Caco-2 (cell line): ENCODE measurements at regions of chr9 and their contacts with region 1.

Region 1: GRCh38 chr9:129028192-129028957 is at the start of gene SH3GLB2:
- DNase-seq: peak; percentile 95 to 96
- H3K4me3 ChIP-seq: peak within 1 kb of the TSS; percentile 73
- H3K4me3 Mint-ChIP-seq: peak within 1 kb of the TSS; percentile 84
- H3K27ac Mint-ChIP-seq: peak within 1 kb of the TSS; percentile 86
- H3K4me1 ChIP-seq: peaks cover 28% of the 10 kb centered on the region
- H3K4me1 Mint-ChIP-seq: peaks cover 36% of the 10 kb centered on the region
- H3K27me3 ChIP-seq: no peaks in the 10 kb centered on the region
- H3K27me3 Mint-ChIP-seq: no peaks in the 10 kb centered on the region
- CTCF ChIP-seq: peak; percentile 83 to 91
- total RNA-seq, gene SH3GLB2: 64.2 and 66.7 TPM in 2 replicates

Region 2: DNA sequence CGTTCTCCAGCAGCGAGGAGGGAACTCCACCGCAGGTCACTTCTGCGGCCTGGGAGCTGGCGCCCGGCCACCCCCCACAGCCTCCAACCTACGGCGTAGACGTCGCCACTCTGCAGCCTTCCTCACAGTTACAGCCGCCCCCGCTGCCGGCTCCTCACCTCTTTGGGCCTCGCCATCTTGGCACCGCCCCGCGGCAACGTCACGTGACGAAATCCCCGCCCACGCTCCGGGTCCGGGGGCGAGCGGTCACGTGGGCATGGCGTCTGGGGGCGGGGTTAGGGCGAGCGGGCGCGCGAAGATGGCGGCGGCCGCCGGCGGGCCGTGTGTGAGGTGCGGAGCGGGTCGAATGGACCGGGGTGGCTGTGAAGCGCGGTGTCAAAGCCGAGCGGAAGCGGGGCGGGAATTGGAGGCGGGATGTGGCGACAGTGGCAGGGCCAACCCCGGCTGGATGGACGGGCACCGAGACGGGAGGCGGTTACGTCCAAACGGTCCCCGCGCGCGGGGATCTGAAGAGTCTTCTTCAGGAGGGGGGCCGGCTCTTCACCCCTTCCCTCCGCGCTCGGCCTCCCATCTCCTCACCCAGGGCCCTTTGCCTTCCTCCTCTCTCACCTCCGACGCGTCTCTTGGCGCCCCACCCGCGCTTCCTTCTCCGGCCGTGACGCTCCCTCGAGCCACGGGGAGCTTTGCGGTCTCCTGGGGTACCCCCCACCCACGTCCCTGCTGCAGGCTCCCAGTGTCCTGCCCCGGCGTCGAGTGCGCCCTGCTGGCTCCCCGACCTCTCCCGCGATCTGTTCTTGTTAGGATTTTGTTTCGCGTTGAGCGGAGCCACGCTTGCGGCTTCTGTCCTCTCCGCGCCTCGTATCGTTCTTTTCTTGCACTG is 80.7 kb before region 1 on chr9 and contains the starts of genes DOLK and NUP188:
- CTCF ChIA-PET with region 1: interaction called, 5 read pairs
- POLR2A ChIA-PET with region 1: no interaction called
- intact Hi-C with region 1: loop called (anchors 5 kb)
- DNase-seq: peak; percentile 94 to 98
- H3K4me3 ChIP-seq: peak within 1 kb of the TSS; percentile 98
- H3K4me3 Mint-ChIP-seq: peak within 1 kb of the TSS; percentile 92
- H3K27ac Mint-ChIP-seq: peak within 1 kb of the TSS; percentile 96
- H3K4me1 ChIP-seq: peaks cover 26% of the 10 kb centered on the region
- H3K4me1 Mint-ChIP-seq: peaks cover 24% of the 10 kb centered on the region
- H3K27me3 ChIP-seq: no peaks in the 10 kb centered on the region
- H3K27me3 Mint-ChIP-seq: no peaks in the 10 kb centered on the region
- CTCF ChIP-seq: no peak
- total RNA-seq, gene DOLK: 25.9 and 27.2 TPM in 2 replicates
- total RNA-seq, gene NUP188: 80.9 and 85.7 TPM in 2 replicates

Region 3: GRCh38 chr9:128972956-128973355 is 55.4 kb before region 1 on chr9:
- CTCF ChIA-PET with region 1: no interaction called
- POLR2A ChIA-PET with region 1: no interaction called
- intact Hi-C with region 1: no loop called
- DNase-seq: no peak
- H3K4me3 ChIP-seq: no peak overlapping the region
- H3K4me3 Mint-ChIP-seq: no peak overlapping the region
- H3K27ac Mint-ChIP-seq: no peak overlapping the region
- H3K4me1 ChIP-seq: no peaks in the 10 kb centered on the region
- H3K4me1 Mint-ChIP-seq: no peaks in the 10 kb centered on the region
- H3K27me3 ChIP-seq: no peaks in the 10 kb centered on the region
- H3K27me3 Mint-ChIP-seq: no peaks in the 10 kb centered on the region
- CTCF ChIP-seq: no peak

Region 4: GRCh38 chr9:129006328-129007034 is 21.9 kb before region 1 on chr9:
- CTCF ChIA-PET with region 1: interaction called, 10 read pairs
- POLR2A ChIA-PET with region 1: no interaction called
- intact Hi-C with region 1: loop called (anchors 2 kb)
- DNase-seq: peak; percentile 77 to 83
- H3K4me3 ChIP-seq: no peak overlapping the region
- H3K4me3 Mint-ChIP-seq: no peak overlapping the region
- H3K27ac Mint-ChIP-seq: peak overlapping the region; percentile 49
- H3K4me1 ChIP-seq: no peaks in the 10 kb centered on the region
- H3K4me1 Mint-ChIP-seq: no peaks in the 10 kb centered on the region
- H3K27me3 ChIP-seq: no peaks in the 10 kb centered on the region
- H3K27me3 Mint-ChIP-seq: no peaks in the 10 kb centered on the region
- CTCF ChIP-seq: peak; percentile 78 to 96

Region 5: GRCh38 chr9:129073404-129073803 is 45.0 kb after region 1 on chr9:
- CTCF ChIA-PET with region 1: interaction called, 10 read pairs
- POLR2A ChIA-PET with region 1: interaction called, 3 read pairs
- intact Hi-C with region 1: no loop called
- DNase-seq: no peak
- H3K4me3 ChIP-seq: no peak overlapping the region
- H3K4me3 Mint-ChIP-seq: no peak overlapping the region
- H3K27ac Mint-ChIP-seq: no peak overlapping the region
- H3K4me1 ChIP-seq: no peaks in the 10 kb centered on the region; the same call in 1 of the 2 replicates
- H3K4me1 Mint-ChIP-seq: no peaks in the 10 kb centered on the region
- H3K27me3 ChIP-seq: no peaks in the 10 kb centered on the region
- H3K27me3 Mint-ChIP-seq: no peaks in the 10 kb centered on the region
- CTCF ChIP-seq: no peak

Region 6: GRCh38 chr9:129080602-129081387 is 52.4 kb after region 1 on chr9 and contains the start of gene DOLPP1:
- CTCF ChIA-PET with region 1: interaction called, 14 read pairs
- POLR2A ChIA-PET with region 1: interaction called, 4 read pairs
- intact Hi-C with region 1: loop called (anchors 1 kb)
- DNase-seq: peak; percentile 99 to 100
- H3K4me3 ChIP-seq: peak within 1 kb of the TSS; percentile 70
- H3K4me3 Mint-ChIP-seq: peak within 1 kb of the TSS; percentile 86
- H3K27ac Mint-ChIP-seq: peak within 1 kb of the TSS; percentile 80
- H3K4me1 ChIP-seq: peaks cover 14% of the 10 kb centered on the region; the same call in 1 of the 2 replicates
- H3K4me1 Mint-ChIP-seq: peaks cover 5% of the 10 kb centered on the region
- H3K27me3 ChIP-seq: no peaks in the 10 kb centered on the region
- H3K27me3 Mint-ChIP-seq: no peaks in the 10 kb centered on the region
- CTCF ChIP-seq: no peak
- total RNA-seq, gene DOLPP1: 44.7 and 45.1 TPM in 2 replicates

Region 7: DNA sequence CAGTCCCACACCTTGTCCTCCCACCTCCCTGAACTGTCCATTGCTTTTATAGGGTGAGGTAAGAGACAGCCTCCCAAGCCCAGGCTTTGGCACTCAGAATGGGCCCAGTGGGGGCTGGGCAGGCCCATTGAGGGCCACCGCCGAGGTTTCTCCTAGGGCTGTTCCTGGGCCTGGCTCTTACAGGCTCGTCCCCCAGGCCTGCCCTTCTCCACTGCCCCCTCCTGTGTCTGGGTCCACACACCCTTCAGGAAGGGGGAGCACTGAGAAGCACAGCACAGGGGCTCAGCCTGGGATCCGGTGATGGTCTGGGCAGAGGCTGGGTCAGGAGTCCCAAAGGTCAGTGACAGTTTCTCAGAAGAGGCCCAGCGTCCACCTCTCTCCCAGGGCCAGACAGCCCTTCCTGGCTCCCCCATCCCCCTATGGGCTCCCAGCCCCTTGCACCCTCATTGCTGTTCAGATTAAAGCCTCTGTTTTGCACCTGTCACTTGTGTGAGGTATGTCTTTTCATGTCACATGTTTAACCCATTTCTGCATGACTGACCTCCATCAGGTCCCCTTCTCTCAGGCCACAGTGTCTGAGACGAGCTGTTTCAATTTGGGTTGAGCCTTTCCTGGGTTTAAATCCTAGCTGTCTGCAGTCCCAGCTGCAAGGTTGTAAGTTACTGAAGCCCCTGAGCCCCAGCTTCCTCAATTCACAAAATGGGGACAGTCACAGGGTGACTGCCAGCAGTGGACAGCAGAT is 120.3 kb after region 1 on chr9:
- CTCF ChIA-PET with region 1: no interaction called
- POLR2A ChIA-PET with region 1: no interaction called
- intact Hi-C with region 1: no loop called
- DNase-seq: no peak
- H3K4me3 ChIP-seq: no peak overlapping the region
- H3K4me3 Mint-ChIP-seq: no peak overlapping the region
- H3K27ac Mint-ChIP-seq: peak overlapping the region; percentile 93
- H3K4me1 ChIP-seq: peaks cover 33% of the 10 kb centered on the region
- H3K4me1 Mint-ChIP-seq: peaks cover 20% of the 10 kb centered on the region
- H3K27me3 ChIP-seq: no peaks in the 10 kb centered on the region
- H3K27me3 Mint-ChIP-seq: no peaks in the 10 kb centered on the region
- CTCF ChIP-seq: no peak

Region 8: DNA sequence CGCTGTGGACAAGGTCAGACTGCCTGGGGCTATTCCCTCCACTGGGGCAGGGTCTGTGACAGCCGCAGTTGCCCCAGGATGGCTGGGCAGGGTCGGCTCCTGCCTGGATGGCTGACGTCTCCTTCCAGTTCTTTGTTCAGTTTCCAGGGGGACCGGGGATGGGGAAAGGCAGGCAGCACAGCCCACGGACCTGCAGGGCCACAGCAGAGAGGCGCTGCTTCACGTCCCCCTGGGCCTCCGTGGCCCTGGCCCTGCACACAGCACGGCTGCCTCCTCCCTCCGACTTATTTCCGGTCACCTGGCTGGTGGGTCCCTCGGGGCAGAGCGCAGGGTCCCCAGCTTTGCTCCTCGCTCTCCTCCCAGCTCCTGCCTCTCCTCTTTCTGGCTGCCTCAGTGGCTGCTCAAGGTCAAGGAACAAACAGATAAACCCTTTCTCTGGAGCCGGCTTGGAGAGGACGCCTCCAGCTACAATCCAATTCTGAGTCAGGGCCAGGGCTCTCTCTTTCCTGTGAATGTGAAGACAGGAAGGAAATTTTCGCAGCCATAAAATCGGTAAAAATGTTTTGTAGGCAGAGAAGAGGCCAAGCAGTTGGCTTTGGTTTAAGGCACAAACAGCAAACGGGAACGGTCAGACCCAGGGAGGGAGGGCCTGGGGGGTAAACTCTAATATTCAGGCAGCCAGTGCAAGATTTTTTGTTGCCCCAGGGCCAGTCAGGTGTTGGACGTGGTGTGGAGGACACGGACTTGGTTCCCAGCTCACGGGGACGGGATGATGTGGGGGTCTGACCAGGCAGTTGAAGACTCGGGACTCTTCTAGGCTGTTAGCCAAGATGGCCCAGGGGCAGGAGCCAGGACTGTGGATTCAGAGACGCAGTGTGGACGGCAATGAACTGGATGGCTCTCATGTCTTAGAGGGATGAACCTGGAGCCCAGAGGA is 423.0 kb after region 1 on chr9:
- CTCF ChIA-PET with region 1: no interaction called
- POLR2A ChIA-PET with region 1: no interaction called
- intact Hi-C with region 1: no loop called
- DNase-seq: no peak
- H3K4me3 ChIP-seq: no peak overlapping the region
- H3K4me3 Mint-ChIP-seq: no peak overlapping the region
- H3K27ac Mint-ChIP-seq: no peak overlapping the region
- H3K4me1 ChIP-seq: no peaks in the 10 kb centered on the region
- H3K4me1 Mint-ChIP-seq: peaks cover 6% of the 10 kb centered on the region
- H3K27me3 ChIP-seq: no peaks in the 10 kb centered on the region
- H3K27me3 Mint-ChIP-seq: no peaks in the 10 kb centered on the region
- CTCF ChIP-seq: no peak